Right ventricle myocardium superior (tissue), 1 donor: ENCODE measurements at regions of chr22 and their contacts with region 1.

Region 1: DNA sequence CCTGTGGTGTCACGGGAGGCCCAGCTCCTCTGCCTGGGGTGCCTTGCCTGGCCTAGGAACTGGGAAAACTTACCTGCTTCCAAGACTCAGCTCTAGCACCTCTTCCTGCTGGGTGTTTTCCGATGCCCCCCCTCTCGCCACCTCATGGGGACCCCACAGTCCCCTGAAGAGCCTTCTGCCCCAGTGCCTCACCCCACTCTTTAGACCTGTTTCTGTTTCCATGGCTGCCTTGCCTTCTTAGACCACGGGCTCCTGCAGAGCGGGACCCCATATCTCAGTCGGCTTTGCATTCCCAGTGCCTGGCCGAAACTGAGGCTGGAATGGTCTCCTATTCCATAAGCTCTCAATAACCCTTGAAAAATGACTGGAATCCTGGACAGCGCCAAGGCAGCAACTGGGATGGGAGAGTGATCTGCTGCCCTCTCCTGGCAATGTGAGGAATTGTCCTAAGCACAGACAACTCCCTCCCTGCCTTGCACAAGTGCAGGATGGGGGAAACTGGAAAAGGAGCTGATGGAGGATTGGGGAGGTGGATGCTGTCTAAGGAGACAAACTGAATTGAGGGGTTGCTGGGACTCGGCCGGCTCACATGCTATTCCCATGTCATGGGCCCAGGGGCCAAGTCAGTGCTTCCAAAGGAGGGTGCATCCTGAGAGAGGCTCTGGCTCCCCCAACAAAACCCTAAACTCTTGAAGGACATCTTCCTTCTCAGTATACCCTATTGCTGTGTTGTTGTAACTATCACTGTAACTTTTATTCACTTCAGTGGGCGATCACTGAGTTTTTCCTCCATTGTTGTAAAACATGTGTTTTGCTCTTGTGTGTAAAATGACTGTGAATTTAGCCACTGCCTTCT is 26.6 kb upstream of the IL17RA start:
- DNase-seq: no peak
- ATAC-seq: peak; percentile 91

Region 2: GRCh38 chr22:16922076-16922475 is 136.1 kb before region 1 on chr22:
- intact Hi-C with region 1: loop called (anchors 5 kb)
- DNase-seq: no peak
- ATAC-seq: no peak

Region 3: DNA sequence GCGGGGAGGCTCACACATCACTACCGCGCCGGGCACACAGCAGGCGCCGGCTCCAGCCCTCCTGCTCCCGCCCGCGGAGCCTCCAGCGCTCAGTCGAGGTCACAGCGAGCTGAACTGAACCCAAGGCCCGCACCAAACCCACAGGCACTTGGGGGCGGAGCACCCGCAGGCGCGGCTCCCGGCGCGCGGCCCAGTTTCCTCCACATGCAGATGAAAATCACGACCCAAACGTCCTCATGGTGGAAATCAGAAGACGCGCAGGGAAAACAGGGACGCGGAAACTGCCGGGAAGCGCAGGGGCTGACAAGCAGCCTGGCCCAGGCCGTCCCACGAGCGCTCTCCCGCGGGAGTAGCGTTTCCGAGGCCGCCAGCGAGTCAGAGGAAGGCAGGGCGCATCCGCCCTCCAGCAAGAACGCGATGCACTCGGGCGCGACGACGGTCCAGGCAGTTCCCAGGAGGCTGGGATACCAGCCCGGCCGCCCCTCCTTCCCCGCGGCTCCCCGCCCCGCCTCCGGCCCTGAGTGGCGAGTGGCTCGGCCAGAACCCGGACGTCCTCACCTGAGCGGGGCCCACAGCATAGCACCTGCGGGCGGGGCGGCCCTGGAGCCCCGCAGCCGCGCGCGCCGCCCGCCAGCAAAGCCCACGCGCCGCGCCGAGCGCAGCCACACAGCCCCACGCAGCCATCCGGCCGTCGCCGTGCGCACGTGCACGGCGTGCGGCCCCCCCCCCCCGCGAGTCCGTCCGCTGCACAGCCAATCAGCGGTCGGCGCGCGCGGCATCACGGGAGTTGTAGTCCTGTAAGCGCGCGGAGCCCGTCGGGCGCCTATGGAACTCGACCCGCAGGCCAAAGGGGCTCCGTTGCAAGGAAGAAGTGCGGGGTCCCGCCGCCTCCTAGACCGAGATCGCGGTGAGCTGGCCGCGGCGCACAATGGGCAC is 100.6 kb after region 1 on chr22 and contains the start of gene HDHD5:
- intact Hi-C with region 1: no loop called
- DNase-seq: peak; percentile 96
- ATAC-seq: peak; percentile 92
- total RNA-seq, gene HDHD5: 59.8 TPM